H1 (cell line): ENCODE measurements at regions of chr5 and their contacts with region 1.

Region 1: DNA sequence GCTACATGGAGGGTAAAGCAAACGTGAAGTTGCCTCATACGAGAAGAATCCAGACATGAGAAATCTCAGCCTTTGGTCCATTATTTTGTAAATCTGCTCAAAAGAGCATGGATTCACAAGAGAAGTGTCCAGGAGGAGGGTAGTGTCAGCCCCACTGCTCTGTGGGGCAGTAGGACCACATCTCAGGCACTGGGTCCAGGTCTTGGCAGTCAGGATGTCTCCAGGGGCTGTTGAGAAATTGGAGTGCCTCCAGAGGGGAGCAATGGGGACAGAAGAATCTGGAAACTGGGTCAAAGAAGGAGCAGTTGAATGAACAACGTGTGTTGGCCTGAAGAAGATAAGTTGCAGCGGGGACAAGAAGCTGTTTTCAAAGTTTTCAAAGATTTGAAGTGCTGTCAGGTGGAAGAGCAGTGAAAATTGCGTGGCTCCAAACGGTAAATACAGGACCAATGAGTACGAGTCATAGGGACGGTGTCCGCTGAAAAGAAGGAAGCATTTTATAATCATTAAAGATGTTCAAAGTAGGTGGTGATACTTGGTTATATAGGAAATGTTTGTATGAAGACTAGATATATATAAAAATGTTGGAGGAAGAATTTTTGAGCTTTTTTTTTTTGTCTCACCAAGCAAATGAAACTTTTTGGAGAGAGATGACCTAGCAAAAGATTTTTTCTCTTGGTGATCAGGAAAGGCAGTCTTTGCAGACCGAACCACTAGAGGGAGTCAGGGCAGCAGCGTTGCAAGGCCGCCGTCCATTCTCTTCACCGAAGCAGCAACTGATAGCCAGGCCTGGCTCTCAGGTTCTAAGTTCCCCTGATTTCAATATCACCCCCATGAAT is 57.1 kb upstream of the ZBED3 start:
- DNase-seq: peak; percentile 29 to 59
- H3K4me3 ChIP-seq: no peak overlapping the region
- H3K27ac ChIP-seq: no peak overlapping the region
- H3K4me1 ChIP-seq: peaks cover 0 to 3% (median under 1%) of the 10 kb centered on the region in 4 experiments; a peak in 2 of 7 replicates
- H3K27me3 ChIP-seq: no peaks in the 10 kb centered on the region
- CTCF ChIP-seq: peak; percentile 83 to 87 (median 84)
- EP300 ChIP-seq: no peak
- POLR2A ChIP-seq: no peak
- RAD21 ChIP-seq: peak; percentile 89 to 91

Region 2: DNA sequence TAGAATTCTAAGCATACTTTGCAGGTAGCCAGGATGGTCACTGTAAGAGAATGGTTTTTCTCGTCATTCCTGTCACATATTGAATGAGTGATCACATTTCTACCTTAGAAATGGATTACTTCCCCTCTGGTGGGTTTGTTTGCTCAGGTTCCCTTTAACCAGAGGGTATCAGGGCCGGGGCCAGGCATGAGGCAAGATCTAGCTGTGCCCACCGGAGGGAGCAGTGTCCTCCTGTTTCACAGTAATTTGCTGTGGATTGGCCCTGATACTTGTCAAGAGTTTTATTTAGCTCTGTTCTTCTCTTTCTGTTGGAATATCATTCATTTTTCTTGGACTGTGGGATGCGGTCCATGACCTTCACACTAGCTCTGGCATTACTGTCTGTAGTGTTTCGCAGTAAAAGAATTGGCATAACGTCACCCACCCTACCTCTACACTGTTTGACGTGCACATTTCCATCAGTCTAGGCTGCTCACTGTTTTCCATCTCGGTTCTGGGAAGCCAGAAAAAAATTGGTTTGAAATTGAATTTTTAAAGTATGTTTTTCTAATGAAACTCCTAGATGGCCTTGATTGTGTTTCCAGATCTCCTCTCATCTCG is 14.7 kb before region 1 on chr5:
- CTCF ChIA-PET with region 1: interaction called, 15 read pairs
- POLR2A ChIA-PET with region 1: no interaction called
- DNase-seq: peak in 1 of 2 experiments; percentile 74
- H3K4me3 ChIP-seq: no peak overlapping the region
- H3K27ac ChIP-seq: no peak overlapping the region
- H3K4me1 ChIP-seq: no peaks in the 10 kb centered on the region
- H3K27me3 ChIP-seq: no peaks in the 10 kb centered on the region
- CTCF ChIP-seq: peak; percentile 63 to 77 (median 75)
- EP300 ChIP-seq: no peak
- POLR2A ChIP-seq: no peak
- RAD21 ChIP-seq: peak; percentile 71 to 76

Region 3: GRCh38 chr5:77155179-77155785 is 11.1 kb after region 1 on chr5:
- CTCF ChIA-PET with region 1: interaction called, 33 read pairs
- POLR2A ChIA-PET with region 1: interaction called, 6 read pairs
- DNase-seq: no peak
- H3K4me3 ChIP-seq: no peak overlapping the region
- H3K27ac ChIP-seq: no peak overlapping the region
- H3K4me1 ChIP-seq: peaks cover 0 to 6% (median 2%) of the 10 kb centered on the region in 4 experiments; a peak in 3 of 7 replicates
- H3K27me3 ChIP-seq: no peaks in the 10 kb centered on the region
- CTCF ChIP-seq: no peak
- EP300 ChIP-seq: no peak
- POLR2A ChIP-seq: no peak
- RAD21 ChIP-seq: no peak